ENCODE measurements at regions of chr16 and their contacts with region 1.

Region 1: GRCh38 chr16:57039148-57039812 is 49.9 kb downstream of the NLRC5 start:
- DNase-seq: peak; percentile 60
- ATAC-seq: peak; percentile 9
- H3K4me3 Mint-ChIP-seq: peak overlapping the region; percentile 2
- H3K27ac Mint-ChIP-seq: peak overlapping the region; percentile 97
- H3K4me1 Mint-ChIP-seq: peaks cover 89% of the 10 kb centered on the region
- H3K27me3 Mint-ChIP-seq: no peaks in the 10 kb centered on the region

Region 2: DNA sequence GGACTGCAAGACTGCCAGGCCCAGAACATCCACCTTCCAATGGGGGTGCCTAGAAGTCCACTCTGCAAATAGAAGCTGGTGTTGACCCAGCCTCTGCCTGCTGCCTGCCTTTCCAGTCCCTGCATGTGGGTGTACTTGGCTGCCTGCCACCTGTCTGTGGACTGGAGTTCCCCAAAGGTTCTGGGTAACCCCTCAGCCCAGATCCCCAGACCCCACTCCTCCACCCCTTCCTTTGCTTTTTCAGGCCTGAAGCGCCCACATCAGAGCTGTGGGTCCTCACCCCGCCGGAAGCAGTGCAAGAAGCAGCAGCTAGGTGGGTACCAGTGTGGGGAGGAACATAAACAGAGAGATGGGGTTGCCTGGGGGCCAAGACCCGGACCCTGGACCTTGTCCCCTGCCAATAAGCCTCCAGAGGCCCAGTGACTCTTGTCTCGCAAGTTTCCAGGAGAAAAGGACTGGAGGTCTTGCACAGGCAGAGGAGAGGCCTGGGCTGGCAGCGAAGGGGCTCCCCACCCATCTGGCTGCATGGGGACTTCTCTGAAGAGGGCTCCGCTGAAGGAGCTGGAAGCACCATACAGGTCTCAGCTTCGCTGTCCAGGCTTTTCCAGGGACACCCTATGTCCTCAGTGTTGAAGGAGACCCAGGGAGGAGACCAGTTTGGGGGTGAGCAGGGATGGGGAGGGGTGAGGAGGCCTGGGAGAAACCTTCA is 15.6 kb before region 1 on chr16:
- CTCF ChIA-PET with region 1: interaction called, 6 read pairs
- POLR2A ChIA-PET with region 1: interaction called, 3 read pairs
- intact Hi-C with region 1: loop called in 1 of 2 experiments (anchors 2 kb)
- DNase-seq: peak; percentile 81
- ATAC-seq: peak; percentile 69
- H3K4me3 Mint-ChIP-seq: no peak overlapping the region
- H3K27ac Mint-ChIP-seq: peak overlapping the region; percentile 75
- H3K4me1 Mint-ChIP-seq: peaks cover 87% of the 10 kb centered on the region
- H3K27me3 Mint-ChIP-seq: no peaks in the 10 kb centered on the region

Measured in activated CD4-positive, alpha-beta T cell treated with anti-CD3 and anti-CD28 coated beads for 36 hours (primary cell).